AG04449 (cell line): ENCODE measurements at regions of chr5 and their contacts with region 1.

Region 1: DNA sequence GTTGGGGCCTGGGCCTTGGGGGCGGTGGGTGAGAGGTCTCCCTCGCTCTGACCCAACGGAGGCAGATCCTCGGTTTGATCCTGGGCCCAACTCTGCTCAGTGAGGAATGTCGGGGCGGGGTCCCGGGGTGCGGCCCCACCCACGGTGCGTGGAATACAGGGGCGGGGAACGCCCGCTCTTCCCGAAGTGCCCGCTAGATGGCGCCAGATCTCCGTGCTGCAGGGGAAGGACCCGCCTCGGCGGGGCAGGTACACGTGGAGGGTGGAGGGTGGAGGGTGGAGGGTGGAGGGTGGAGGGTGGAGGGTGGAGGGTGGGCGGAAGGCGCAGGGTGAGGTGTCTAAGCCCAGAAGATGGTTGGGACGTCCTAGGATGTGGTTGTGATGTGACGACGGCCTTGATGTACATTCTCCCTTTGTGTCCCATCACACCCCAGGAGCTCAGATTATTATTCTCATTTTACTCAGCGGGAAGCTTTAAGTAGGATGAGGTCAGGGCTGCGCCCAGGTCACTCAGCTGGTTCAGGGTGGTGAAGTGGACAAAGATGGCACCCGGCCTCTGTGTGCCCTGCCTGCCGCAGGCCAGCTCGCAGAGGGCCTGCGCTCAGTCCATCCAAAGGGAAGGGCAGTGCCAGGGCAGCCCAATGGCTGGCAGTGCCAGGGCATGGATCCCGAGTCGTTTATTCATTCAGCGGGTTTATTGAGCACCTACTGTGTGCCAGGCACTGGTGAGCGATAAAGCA is 9.4 kb upstream of the RPS14 start:
- DNase-seq: no peak
- H3K4me3 ChIP-seq: peak overlapping the region; percentile 18
- CTCF ChIP-seq: peak; percentile 93

Region 2: GRCh38 chr5:150511578-150512367 is 52.8 kb after region 1 on chr5:
- CTCF ChIA-PET with region 1: interaction called, 10 read pairs
- POLR2A ChIA-PET with region 1: interaction called, 4 read pairs
- DNase-seq: no peak
- H3K4me3 ChIP-seq: no peak overlapping the region
- CTCF ChIP-seq: no peak

Region 3: DNA sequence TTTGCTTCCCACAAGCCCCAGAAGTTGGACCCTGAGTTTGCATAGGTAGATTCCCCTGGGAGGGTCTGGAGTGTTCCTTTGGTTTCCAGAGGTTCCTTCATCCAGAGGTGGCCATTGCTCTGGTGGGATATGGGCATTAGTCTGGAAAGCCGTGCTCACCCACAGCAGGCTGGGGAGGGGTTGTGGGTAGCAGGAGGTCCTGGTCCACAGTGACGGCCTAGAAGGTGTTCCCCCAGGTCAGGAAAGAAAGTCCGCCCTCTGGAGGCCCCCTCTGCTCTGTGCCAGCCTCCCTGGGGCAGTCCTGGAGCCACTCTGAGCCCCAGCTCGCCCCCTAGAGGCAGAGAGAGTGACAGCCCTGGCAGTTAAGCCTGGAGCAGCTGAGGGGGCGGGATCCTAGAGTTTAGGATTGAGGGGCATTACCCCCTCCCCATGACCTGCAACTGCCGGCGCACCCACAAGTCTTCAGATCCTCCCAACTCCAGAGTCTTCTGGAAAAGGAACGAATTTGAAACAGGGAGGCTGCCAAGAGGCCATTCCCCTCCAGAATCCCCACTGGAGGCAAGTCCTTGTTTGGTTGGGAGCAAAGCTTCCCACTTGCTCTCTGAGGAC is 85.7 kb after region 1 on chr5:
- CTCF ChIA-PET with region 1: interaction called, 39 read pairs
- POLR2A ChIA-PET with region 1: no interaction called
- DNase-seq: no peak
- H3K4me3 ChIP-seq: no peak overlapping the region
- CTCF ChIP-seq: peak; percentile 81

Region 4: GRCh38 chr5:150656191-150657132 is 197.5 kb after region 1 on chr5:
- CTCF ChIA-PET with region 1: interaction called, 26 read pairs
- POLR2A ChIA-PET with region 1: no interaction called
- DNase-seq: no peak
- H3K4me3 ChIP-seq: peak overlapping the region; percentile 59
- CTCF ChIP-seq: peak; percentile 78